ENCODE measurements at regions of chr18 and their contacts with region 1.

Region 1: GRCh38 chr18:21191596-21192307 is 50.3 kb upstream of the GREB1L start:
- DNase-seq: peak; percentile 49
- H3K4me3 ChIP-seq: no peak overlapping the region
- H3K27ac ChIP-seq: no peak overlapping the region
- H3K4me1 ChIP-seq: no peaks in the 10 kb centered on the region
- H3K27me3 ChIP-seq: no peaks in the 10 kb centered on the region
- CTCF ChIP-seq: peak; percentile 46

Region 2: DNA sequence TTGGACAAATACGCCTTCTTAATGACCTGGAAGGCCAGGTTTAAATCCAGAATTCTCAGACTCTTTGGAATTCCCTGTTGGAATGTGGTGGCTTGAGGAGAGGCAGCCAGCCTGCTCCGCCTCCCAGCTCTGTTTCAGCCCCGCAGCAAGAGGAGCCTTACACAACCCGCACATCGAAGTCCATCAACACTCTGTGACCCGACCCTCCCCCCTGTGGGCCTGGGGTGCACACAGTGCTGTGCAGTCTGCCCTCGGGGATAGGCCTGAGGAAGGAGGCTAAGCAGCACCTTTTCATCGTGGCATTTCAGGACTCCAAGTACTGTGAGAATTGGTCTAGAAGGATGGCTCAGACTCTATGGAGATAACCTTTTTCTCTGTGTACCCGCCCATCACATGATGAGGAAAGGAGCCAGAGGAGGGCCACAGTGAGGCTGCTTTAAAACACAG is 124.0 kb after region 1 on chr18:
- intact Hi-C with region 1: no loop called
- DNase-seq: no peak
- H3K4me3 ChIP-seq: no peak overlapping the region
- H3K27ac ChIP-seq: no peak overlapping the region
- H3K4me1 ChIP-seq: no peaks in the 10 kb centered on the region
- H3K27me3 ChIP-seq: no peaks in the 10 kb centered on the region
- CTCF ChIP-seq: no peak

Region 3: DNA sequence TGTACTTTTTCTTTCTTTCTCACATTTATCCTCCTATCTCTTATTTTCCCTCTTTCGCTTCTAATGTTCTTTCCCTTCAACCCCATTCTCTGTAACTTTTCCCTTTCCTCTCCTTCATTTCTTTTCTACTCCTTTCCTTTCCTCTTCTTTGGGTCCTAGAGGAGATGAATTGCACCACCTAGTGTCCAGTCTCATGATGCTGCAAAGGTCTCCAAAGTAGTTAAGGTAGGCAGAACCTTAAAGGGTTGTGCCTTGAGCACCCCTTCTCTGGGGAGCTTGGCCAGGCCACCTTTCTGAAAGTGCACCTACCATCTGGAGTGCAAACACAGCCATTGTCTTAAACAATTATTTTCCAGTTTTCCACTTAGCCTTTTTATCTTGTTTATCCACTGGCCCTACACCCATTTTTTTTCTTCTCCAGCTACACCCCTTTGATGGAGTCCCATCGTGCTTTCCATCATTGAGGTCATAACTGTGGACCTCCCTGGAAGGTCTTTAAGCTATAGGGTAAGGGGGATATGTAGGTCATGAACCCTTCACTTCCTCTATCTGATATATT is 252.8 kb after region 1 on chr18:
- intact Hi-C with region 1: loop called (anchors 2 kb)
- DNase-seq: peak; percentile 21
- H3K4me3 ChIP-seq: no peak overlapping the region
- H3K27ac ChIP-seq: no peak overlapping the region
- H3K4me1 ChIP-seq: no peaks in the 10 kb centered on the region
- H3K27me3 ChIP-seq: no peaks in the 10 kb centered on the region
- CTCF ChIP-seq: peak; percentile 46

Region 4: GRCh38 chr18:21777814-21778213 is 586.1 kb after region 1 on chr18:
- intact Hi-C with region 1: no loop called
- DNase-seq: no peak
- H3K4me3 ChIP-seq: no peak overlapping the region
- H3K27ac ChIP-seq: no peak overlapping the region
- H3K4me1 ChIP-seq: no peaks in the 10 kb centered on the region
- H3K27me3 ChIP-seq: no peaks in the 10 kb centered on the region
- CTCF ChIP-seq: no peak

Measured in colonic mucosa (tissue), 4 donors.